Activated T-helper 1 cell treated with anti-CD3 and anti-CD28 coated beads, Interleukin-12 subunit alpha, Interleukin-12 subunit beta, Interleukin-2, Interleukin-4 antibody, amounts not matched to agents 30 ng/mL and 10 ng/mL and 1 ng/mL, durations not matched to agents 14 hours and 24 hours and 36 hours (primary cell): ENCODE measurements at regions of chr9 and their contacts with region 1.

Region 1: GRCh38 chr9:112379177-112380101 is 469 bp upstream of the HSDL2 start:
- DNase-seq: peak; percentile 97
- H3K4me3 Mint-ChIP-seq: peak overlapping the region; percentile 98
- H3K27ac Mint-ChIP-seq: peak overlapping the region; percentile 99
- H3K4me1 Mint-ChIP-seq: peaks cover 52% of the 10 kb centered on the region
- H3K27me3 Mint-ChIP-seq: no peaks in the 10 kb centered on the region

Region 2: GRCh38 chr9:111661150-111661801 is 718.2 kb before region 1 on chr9 and contains the start of gene GNG10:
- intact Hi-C with region 1: loop called (anchors 2 kb)
- DNase-seq: peak; percentile 66
- H3K4me3 Mint-ChIP-seq: peak within 1 kb of the TSS; percentile 89
- H3K27ac Mint-ChIP-seq: peak within 1 kb of the TSS; percentile 89
- H3K4me1 Mint-ChIP-seq: peaks cover 34% of the 10 kb centered on the region
- H3K27me3 Mint-ChIP-seq: no peaks in the 10 kb centered on the region
- total RNA-seq, gene GNG10: 30.7 and 35.4 TPM in 2 replicates

Region 3: DNA sequence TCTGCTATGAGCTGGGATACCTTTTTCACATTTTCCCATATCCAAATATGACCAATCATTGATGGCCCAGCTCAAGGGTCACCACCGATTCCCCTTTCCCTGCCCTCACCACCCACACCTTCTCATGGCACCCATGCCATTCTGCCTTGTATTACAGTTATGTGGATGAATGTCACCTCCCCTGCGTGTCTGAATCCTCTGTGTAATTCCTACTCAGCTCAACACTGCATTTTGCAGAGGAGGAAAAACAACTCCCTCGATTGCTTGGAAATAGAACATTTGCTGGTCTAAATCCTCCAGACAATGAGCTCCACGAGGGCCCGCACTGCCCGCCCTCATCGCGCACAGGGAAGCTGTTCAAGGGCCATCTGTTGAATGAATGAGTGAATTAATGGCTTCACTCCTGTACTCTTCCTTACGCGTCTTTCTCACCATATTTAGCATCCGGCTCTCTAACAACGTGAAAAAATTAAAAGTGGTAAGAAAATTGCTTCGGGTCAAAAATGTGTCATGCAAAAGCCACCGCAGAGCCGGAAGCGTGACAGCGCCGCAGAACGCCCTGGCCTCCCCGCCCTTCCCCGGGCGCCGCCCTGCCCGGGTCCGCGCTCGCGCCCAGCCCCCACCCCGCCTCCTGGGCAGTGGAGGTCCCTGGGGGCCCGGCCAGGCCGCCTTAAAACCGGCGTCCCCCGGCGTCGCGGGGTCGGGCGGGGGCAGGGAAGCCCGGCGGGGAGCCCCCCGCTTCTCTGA is 205.0 kb before region 1 on chr9:
- intact Hi-C with region 1: loop called (anchors 1 kb)
- DNase-seq: peak; percentile 73
- H3K4me3 Mint-ChIP-seq: peak overlapping the region; percentile 88
- H3K27ac Mint-ChIP-seq: peak overlapping the region; percentile 93
- H3K4me1 Mint-ChIP-seq: peaks cover 74% of the 10 kb centered on the region
- H3K27me3 Mint-ChIP-seq: peaks cover 1% of the 10 kb centered on the region

Region 4: GRCh38 chr9:112361601-112362000 is 17.8 kb before region 1 on chr9:
- intact Hi-C with region 1: loop called (anchors 2 kb)
- DNase-seq: no peak
- H3K4me3 Mint-ChIP-seq: no peak overlapping the region
- H3K27ac Mint-ChIP-seq: no peak overlapping the region
- H3K4me1 Mint-ChIP-seq: peaks cover 12% of the 10 kb centered on the region
- H3K27me3 Mint-ChIP-seq: peaks cover 26% of the 10 kb centered on the region

Region 5: GRCh38 chr9:112750111-112750767 is 370.8 kb after region 1 on chr9 and contains the start of gene SNX30:
- intact Hi-C with region 1: loop called (anchors 1 kb)
- DNase-seq: peak; percentile 78
- H3K4me3 Mint-ChIP-seq: peak within 1 kb of the TSS; percentile 86
- H3K27ac Mint-ChIP-seq: peak within 1 kb of the TSS; percentile 88
- H3K4me1 Mint-ChIP-seq: peaks cover 67% of the 10 kb centered on the region
- H3K27me3 Mint-ChIP-seq: peaks cover 5% of the 10 kb centered on the region
- total RNA-seq, gene SNX30: 1.9 and 2.1 TPM in 2 replicates